KBM-7 (cell line): ENCODE measurements at regions of chr6 and their contacts with region 1.

Region 1: GRCh38 chr6:136792410-136793262 is at the start of gene MAP3K5:
- DNase-seq: peak; percentile 95

Region 2: GRCh38 chr6:136365776-136366354 is 426.8 kb before region 1 on chr6:
- in situ Hi-C with region 1: loop called (anchors 25 kb)
- DNase-seq: peak; percentile 90

Region 3: GRCh38 chr6:136463743-136464142 is 328.9 kb before region 1 on chr6:
- in situ Hi-C with region 1: no loop called
- DNase-seq: no peak

Region 4: DNA sequence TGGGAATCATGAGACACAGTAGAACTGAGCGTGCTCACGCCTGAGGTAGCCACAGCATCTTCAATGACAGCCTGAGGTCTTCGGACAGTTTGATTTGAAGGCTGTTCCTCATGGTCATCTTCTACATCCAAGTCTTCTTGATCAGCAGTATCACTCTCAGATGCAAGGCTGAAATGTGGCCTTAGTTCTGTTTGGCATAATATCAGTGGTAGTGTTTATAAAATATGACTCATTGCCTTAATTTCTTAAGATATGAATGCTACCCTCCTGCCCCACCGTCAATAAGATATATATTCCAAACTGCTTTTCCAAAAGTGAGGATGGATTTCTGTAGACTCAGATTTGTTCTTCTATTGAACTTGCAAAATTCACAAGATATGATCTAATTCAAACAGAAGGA is 224.9 kb before region 1 on chr6:
- in situ Hi-C with region 1: no loop called
- DNase-seq: no peak

Region 5: GRCh38 chr6:137033828-137034227 is 241.2 kb after region 1 on chr6:
- in situ Hi-C with region 1: no loop called
- DNase-seq: peak; percentile 84